ENCODE measurements at regions of chr6 and their contacts with region 1.

Region 1: DNA sequence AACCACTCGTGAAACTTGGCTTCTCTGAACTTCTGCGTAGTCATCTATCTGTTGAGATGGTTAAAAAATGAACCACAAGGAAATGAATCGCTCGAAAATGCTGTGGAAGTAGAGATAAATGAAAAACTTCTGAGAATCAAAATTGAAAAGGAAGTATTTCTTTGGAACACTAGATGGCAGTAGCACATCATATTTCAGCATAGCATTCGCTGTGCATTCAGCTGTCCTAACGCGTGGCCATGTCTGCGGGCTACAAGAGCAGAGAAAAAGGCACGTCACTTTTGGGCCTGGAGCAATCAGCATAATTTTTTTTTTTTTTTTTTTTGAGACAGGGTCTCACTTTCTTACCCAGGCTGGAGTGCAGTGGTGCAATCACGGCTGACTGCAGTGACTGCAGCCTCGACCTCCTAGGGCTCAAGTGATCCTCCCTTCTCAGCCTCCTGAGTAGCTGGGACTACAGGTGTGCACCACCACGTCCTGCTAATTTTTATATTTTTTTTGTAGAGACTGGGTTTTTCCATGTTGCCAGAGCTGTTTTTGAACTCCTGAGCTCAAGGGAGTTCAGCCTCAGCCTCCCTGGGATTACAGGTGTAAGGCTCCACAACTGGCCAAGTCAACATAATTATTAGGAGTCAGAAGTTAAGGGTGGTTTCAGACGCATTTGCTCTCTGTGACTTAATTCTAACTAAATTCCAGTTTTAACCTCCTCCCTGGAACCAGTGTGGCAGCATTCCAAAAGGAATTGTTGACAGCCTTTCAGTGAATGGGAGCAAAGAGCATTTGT is 8.8 kb upstream of the PERP start:
- DNase-seq: peak; percentile 42 to 93
- H3K4me3 ChIP-seq: no peak overlapping the region
- H3K27ac ChIP-seq: peak overlapping the region; percentile 67
- H3K4me1 ChIP-seq: peaks cover 24% of the 10 kb centered on the region
- H3K27me3 ChIP-seq: no peaks in the 10 kb centered on the region
- CTCF ChIP-seq: peak; percentile 95

Region 2: GRCh38 chr6:137989664-137990063 is 126.4 kb before region 1 on chr6:
- CTCF ChIA-PET with region 1: no interaction called
- POLR2A ChIA-PET with region 1: no interaction called
- intact Hi-C with region 1: no loop called
- DNase-seq: no peak
- H3K4me3 ChIP-seq: no peak overlapping the region
- H3K27ac ChIP-seq: no peak overlapping the region
- H3K4me1 ChIP-seq: no peaks in the 10 kb centered on the region
- H3K27me3 ChIP-seq: no peaks in the 10 kb centered on the region
- CTCF ChIP-seq: no peak

Region 3: GRCh38 chr6:138403801-138404661 is 288.0 kb after region 1 on chr6 and contains the start of gene HEBP2:
- CTCF ChIA-PET with region 1: no interaction called
- POLR2A ChIA-PET with region 1: no interaction called
- intact Hi-C with region 1: loop called (anchors 1 kb)
- DNase-seq: peak; percentile 94 to 95
- H3K4me3 ChIP-seq: peak within 1 kb of the TSS; percentile 85
- H3K27ac ChIP-seq: peak within 1 kb of the TSS; percentile 81
- H3K4me1 ChIP-seq: peaks cover 22% of the 10 kb centered on the region
- H3K27me3 ChIP-seq: no peaks in the 10 kb centered on the region
- CTCF ChIP-seq: peak; percentile 67
- total RNA-seq, gene HEBP2: 41.0 and 55.0 TPM in 2 replicates

Region 4: GRCh38 chr6:138428944-138429598 is 313.0 kb after region 1 on chr6:
- CTCF ChIA-PET with region 1: no interaction called
- POLR2A ChIA-PET with region 1: no interaction called
- intact Hi-C with region 1: loop called (anchors 2 kb)
- DNase-seq: peak in 1 of 2 experiments; percentile 55
- H3K4me3 ChIP-seq: no peak overlapping the region
- H3K27ac ChIP-seq: no peak overlapping the region
- H3K4me1 ChIP-seq: no peaks in the 10 kb centered on the region
- H3K27me3 ChIP-seq: no peaks in the 10 kb centered on the region
- CTCF ChIP-seq: peak; percentile 89

Region 5: DNA sequence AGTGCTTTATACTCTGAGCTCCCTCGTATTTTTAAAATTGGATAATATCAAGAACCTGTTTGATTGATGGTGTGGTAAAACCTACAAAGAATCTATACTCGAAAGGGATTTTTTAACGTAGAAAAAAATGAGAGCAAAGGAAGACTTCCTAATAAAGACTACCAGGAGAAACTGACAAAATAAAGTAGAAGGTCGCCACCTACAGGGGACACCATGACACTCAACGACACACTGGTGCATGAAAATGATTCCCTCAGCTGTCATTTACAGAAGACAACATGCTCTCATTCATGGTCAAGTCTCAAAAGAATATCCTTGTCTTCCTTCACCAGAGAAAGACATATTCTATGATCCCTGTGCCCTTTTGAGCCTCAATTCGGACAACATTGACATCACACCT is 393.3 kb after region 1 on chr6:
- CTCF ChIA-PET with region 1: no interaction called
- POLR2A ChIA-PET with region 1: no interaction called
- intact Hi-C with region 1: loop called (anchors 2 kb)
- DNase-seq: peak; percentile 8 to 53
- H3K4me3 ChIP-seq: no peak overlapping the region
- H3K27ac ChIP-seq: no peak overlapping the region
- H3K4me1 ChIP-seq: no peaks in the 10 kb centered on the region
- H3K27me3 ChIP-seq: no peaks in the 10 kb centered on the region
- CTCF ChIP-seq: peak; percentile 69

Region 6: DNA sequence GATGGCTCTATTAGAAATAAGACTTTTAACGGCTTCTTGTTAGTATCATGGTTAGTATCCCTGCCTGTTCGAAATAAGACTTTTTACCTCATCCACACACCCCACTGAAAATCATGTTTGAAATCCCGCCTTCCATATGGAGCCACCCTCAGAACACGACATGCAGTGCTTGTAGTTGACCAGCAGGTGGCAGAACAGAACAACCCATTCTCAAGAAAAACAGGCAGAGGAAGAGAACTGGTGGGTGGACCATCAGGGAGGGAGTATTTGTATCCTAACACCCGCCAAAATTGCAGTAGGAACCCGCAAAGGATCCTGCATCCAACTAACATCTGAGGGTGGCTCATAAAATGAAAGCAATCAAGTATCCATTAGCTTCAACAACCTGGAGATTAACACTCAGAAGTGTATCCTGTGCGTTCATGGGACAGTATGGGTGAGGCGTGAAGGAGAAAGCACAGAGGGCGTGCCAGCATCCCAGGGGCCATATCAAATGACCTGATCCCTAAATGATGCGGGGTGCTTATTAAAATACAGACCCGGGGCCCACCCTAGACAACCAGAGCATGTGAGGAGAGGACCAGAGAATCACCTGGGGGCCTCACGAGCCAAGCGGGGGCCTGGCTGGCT is 472.9 kb after region 1 on chr6:
- CTCF ChIA-PET with region 1: no interaction called
- POLR2A ChIA-PET with region 1: no interaction called
- intact Hi-C with region 1: loop called (anchors 2 kb)
- DNase-seq: peak; percentile 30 to 65
- H3K4me3 ChIP-seq: no peak overlapping the region
- H3K27ac ChIP-seq: no peak overlapping the region
- H3K4me1 ChIP-seq: peaks cover 20% of the 10 kb centered on the region
- H3K27me3 ChIP-seq: no peaks in the 10 kb centered on the region
- CTCF ChIP-seq: peak; percentile 100

Region 7: GRCh38 chr6:138765896-138766655 is 650.0 kb after region 1 on chr6:
- CTCF ChIA-PET with region 1: no interaction called
- POLR2A ChIA-PET with region 1: no interaction called
- intact Hi-C with region 1: loop called (anchors 1 kb)
- DNase-seq: peak in 1 of 2 experiments; percentile 60
- H3K4me3 ChIP-seq: no peak overlapping the region
- H3K27ac ChIP-seq: no peak overlapping the region
- H3K4me1 ChIP-seq: no peaks in the 10 kb centered on the region
- H3K27me3 ChIP-seq: no peaks in the 10 kb centered on the region
- CTCF ChIP-seq: peak; percentile 95

Region 8: GRCh38 chr6:139364302-139364981 is 1248.4 kb after region 1 on chr6:
- CTCF ChIA-PET with region 1: interaction called, 6 read pairs
- POLR2A ChIA-PET with region 1: no interaction called
- intact Hi-C with region 1: loop called (anchors 2 kb)
- DNase-seq: peak in 1 of 2 experiments; percentile 65
- H3K4me3 ChIP-seq: no peak overlapping the region
- H3K27ac ChIP-seq: no peak overlapping the region
- H3K4me1 ChIP-seq: peaks cover 9% of the 10 kb centered on the region
- H3K27me3 ChIP-seq: no peaks in the 10 kb centered on the region
- CTCF ChIP-seq: peak; percentile 97